Caco-2 (cell line): ENCODE measurements at regions of chr1 and their contacts with region 1.

Region 1: GRCh38 chr1:85571830-85572229 is 8.7 kb upstream of the CCN1 start:
- DNase-seq: no peak
- H3K4me3 ChIP-seq: no peak overlapping the region
- H3K4me3 Mint-ChIP-seq: no peak overlapping the region
- H3K27ac Mint-ChIP-seq: peak overlapping the region; percentile 50
- H3K4me1 ChIP-seq: peaks cover 67% of the 10 kb centered on the region
- H3K4me1 Mint-ChIP-seq: peaks cover 25% of the 10 kb centered on the region
- H3K27me3 ChIP-seq: no peaks in the 10 kb centered on the region
- H3K27me3 Mint-ChIP-seq: no peaks in the 10 kb centered on the region
- CTCF ChIP-seq: no peak

Region 2: DNA sequence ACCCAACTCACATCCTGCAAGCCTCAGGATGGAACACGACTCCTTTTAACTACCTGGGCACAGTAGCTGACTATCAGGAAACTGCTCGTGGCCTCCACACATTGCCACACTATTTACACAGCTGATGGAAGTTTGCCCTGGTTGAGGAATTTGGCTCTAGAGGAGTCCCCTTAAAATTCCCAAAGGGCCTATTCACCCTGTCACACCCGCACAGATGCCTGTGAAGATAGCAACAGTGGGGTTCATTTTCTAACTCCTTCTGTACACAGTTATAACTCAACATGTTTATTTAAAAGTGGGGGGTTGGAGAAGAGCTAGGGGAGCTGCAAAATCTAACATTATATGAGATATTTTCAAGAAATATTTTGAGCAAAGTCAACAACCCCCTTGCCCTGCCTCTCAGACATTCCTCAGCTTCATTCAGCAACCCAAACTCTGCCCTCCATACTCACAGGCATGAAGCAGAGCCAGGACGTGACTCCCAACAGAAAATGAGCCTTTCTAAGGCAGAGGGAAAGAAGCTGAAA is 27.1 kb before region 1 on chr1:
- CTCF ChIA-PET with region 1: interaction called, 3 read pairs
- POLR2A ChIA-PET with region 1: interaction called, 5 read pairs
- intact Hi-C with region 1: loop called (anchors 1 kb)
- DNase-seq: peak; percentile 62 to 67
- H3K4me3 ChIP-seq: no peak overlapping the region
- H3K4me3 Mint-ChIP-seq: peak overlapping the region; percentile 50
- H3K27ac Mint-ChIP-seq: peak overlapping the region; percentile 94
- H3K4me1 ChIP-seq: peaks cover 28% of the 10 kb centered on the region
- H3K4me1 Mint-ChIP-seq: peaks cover 15% of the 10 kb centered on the region
- H3K27me3 ChIP-seq: no peaks in the 10 kb centered on the region
- H3K27me3 Mint-ChIP-seq: no peaks in the 10 kb centered on the region
- CTCF ChIP-seq: no peak

Region 3: DNA sequence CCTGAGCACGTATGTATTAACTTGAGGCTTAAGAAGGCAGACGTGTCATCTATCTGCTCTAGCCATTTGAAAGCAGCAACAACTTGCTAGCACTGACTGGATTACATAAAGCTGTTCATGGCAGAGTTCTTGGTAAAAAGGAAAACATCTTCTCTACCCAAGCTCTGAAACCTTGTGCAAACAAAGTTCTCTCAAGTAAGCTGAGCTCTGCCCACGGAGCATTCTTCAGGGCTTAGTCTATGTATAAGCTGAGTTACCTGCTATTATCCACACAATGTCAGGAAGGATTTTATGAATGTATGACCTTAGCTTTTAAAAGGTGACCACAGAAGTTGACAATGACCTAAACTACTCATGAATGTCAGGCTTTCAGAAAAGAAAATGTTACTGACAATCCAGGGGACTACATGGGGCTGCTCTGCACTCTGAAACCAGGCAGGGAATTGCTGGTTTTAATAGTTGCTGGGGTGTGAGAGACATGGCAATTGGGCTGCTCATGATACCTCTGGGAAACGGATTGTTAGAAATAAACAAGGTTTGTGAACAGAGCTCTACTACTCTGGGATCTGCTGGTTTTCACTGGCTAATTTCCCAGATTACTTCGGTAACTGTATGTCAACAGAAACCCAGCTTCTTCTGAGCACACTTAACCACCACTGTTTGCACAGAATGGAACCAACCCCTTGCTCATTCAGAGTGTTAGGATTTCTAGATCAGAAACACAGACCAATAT is 20.9 kb before region 1 on chr1:
- CTCF ChIA-PET with region 1: interaction called, 3 read pairs
- POLR2A ChIA-PET with region 1: interaction called, 3 read pairs
- intact Hi-C with region 1: loop called (anchors 1 kb)
- DNase-seq: peak in 1 of 2 experiments; percentile 32
- H3K4me3 ChIP-seq: no peak overlapping the region
- H3K4me3 Mint-ChIP-seq: peak overlapping the region; percentile 23
- H3K27ac Mint-ChIP-seq: peak overlapping the region; percentile 50
- H3K4me1 ChIP-seq: peaks cover 19% of the 10 kb centered on the region
- H3K4me1 Mint-ChIP-seq: peaks cover 24% of the 10 kb centered on the region
- H3K27me3 ChIP-seq: no peaks in the 10 kb centered on the region
- H3K27me3 Mint-ChIP-seq: no peaks in the 10 kb centered on the region
- CTCF ChIP-seq: no peak

Region 4: DNA sequence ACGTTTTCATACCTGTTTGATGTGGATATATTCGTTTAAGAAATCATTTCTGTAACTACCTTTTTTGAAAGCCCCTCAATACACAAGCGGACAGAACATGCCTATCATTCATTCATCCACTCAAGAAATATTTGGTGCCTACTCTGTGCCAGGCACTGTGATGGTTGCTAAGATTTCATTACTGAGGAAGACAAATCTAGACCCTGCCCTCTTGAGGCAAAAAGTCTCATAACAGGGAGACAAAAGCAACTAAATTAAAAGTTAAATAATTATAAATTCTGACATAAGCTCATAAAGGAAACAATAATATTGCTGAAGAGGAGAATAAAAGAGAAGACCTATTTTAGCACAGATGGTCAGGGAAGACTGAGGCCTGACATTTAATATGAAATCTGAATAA is 339.9 kb after region 1 on chr1:
- CTCF ChIA-PET with region 1: no interaction called
- POLR2A ChIA-PET with region 1: no interaction called
- intact Hi-C with region 1: no loop called
- DNase-seq: no peak
- H3K4me3 ChIP-seq: no peak overlapping the region
- H3K4me3 Mint-ChIP-seq: no peak overlapping the region
- H3K27ac Mint-ChIP-seq: no peak overlapping the region
- H3K4me1 ChIP-seq: no peaks in the 10 kb centered on the region
- H3K4me1 Mint-ChIP-seq: no peaks in the 10 kb centered on the region
- H3K27me3 ChIP-seq: no peaks in the 10 kb centered on the region
- H3K27me3 Mint-ChIP-seq: no peaks in the 10 kb centered on the region
- CTCF ChIP-seq: peak in 1 of 2 experiments; percentile 22